Activated T-helper 2 cell treated with anti-CD3 and anti-CD28 coated beads, Interferon-gamma antibody, Interleukin-2, Interleukin-4, amounts not matched to agents 10 μg/mL and 5 μg/mL and 100 μg/mL, durations not matched to agents 14 hours and 24 hours and 36 hours (primary cell): ENCODE measurements at regions of chr16 and their contacts with region 1.

Region 1: DNA sequence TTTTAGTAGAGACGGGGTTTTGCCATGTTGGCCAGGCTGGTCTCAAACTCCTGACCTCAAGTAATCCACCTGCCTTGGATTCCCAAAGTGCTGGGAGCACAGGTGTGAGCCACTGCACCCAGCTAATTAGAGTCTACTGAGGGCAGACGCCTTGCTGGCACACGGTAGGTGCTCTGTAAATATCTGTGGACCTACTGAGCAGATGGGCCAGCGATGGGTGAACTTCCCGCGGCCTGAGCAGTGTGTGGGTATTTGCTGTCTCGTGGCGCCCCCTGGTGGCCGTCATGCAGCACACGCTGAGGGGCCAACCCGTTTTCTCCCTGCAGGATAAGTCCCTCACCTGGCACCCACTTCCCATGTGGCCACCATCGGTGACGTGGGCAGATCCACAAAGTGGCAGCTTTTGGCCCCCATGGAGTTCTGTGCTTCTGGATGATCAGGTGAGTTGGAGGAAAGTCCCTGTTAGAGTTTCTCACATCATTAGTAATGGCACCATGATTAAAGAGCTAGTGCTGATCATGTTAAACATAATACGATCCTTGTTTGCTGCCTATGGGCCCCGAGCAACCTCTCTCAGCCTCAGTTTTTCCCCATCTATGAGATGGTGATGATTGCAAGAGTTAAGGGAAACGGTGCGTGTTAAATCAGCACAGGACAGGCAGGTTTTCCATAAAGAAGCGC is 40.7 kb downstream of the ZDHHC7 start:
- DNase-seq: peak; percentile 68
- H3K4me3 Mint-ChIP-seq: no peak overlapping the region
- H3K27ac Mint-ChIP-seq: no peak overlapping the region
- H3K4me1 Mint-ChIP-seq: peaks cover 1% of the 10 kb centered on the region
- H3K27me3 Mint-ChIP-seq: no peaks in the 10 kb centered on the region

Region 2: DNA sequence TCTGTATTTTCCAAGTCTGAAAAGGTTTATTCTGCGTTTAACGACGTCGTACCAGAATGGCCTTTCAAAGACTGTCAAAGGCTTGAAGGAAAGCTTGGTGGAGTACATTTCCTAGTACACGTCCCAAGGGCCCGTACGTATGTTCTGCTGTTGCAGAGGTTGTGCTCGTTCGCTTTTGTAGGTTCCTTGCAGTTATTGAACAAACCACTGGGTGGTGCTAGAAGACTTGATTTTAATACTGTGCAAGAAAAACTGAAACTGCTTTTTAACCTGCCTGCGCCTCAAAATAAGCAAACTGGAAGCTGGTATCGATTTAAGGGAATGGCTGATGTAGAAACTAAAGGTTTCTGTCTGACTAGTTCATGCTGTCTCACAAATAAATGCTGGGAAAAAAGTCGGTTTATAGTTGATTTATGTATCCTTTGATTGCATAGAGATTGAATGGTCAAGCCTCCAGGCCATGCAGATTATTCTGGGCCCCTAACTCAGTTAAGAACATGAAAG is 216.2 kb before region 1 on chr16:
- intact Hi-C with region 1: loop called (anchors 1 kb)
- DNase-seq: peak; percentile 68
- H3K4me3 Mint-ChIP-seq: no peak overlapping the region
- H3K27ac Mint-ChIP-seq: no peak overlapping the region
- H3K4me1 Mint-ChIP-seq: peaks cover 62% of the 10 kb centered on the region
- H3K27me3 Mint-ChIP-seq: no peaks in the 10 kb centered on the region

Region 3: DNA sequence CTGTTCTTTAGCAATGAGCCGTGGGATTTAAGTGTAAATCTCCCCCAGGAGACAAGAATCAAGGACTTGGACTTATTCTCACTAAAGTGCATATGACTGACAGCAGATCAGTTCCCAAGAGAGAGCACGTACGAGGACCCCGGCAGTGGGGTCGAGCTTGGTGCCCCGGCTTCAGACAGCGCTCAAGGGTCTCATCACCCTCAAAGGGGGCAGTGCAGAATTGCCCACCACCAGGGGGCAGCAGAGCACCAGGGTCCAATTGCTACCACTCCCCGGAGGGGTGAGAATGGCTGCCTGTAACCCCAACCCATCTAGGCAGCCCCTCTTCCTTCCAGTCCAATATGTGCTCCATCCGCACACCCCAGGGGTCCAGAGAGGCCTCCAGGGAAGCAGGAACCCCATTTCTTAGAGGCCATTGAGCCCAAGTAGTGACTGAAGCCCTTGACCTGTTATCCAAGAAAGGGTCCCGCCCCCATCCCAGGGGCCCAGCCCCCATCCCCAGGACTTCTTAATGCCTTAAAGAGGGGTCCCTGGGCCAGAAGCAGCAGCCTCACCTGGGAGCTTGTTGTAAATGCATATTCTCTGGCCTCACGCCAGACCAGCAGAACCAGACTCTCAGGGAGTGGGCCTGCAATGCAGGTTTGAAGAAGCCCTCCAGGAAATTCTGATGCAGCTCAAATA is 45.4 kb before region 1 on chr16:
- intact Hi-C with region 1: loop called (anchors 1 kb)
- DNase-seq: peak; percentile 36
- H3K4me3 Mint-ChIP-seq: no peak overlapping the region
- H3K27ac Mint-ChIP-seq: no peak overlapping the region
- H3K4me1 Mint-ChIP-seq: no peaks in the 10 kb centered on the region
- H3K27me3 Mint-ChIP-seq: no peaks in the 10 kb centered on the region